H1 (cell line): ENCODE measurements at regions of chr9 and their contacts with region 1.

Region 1: DNA sequence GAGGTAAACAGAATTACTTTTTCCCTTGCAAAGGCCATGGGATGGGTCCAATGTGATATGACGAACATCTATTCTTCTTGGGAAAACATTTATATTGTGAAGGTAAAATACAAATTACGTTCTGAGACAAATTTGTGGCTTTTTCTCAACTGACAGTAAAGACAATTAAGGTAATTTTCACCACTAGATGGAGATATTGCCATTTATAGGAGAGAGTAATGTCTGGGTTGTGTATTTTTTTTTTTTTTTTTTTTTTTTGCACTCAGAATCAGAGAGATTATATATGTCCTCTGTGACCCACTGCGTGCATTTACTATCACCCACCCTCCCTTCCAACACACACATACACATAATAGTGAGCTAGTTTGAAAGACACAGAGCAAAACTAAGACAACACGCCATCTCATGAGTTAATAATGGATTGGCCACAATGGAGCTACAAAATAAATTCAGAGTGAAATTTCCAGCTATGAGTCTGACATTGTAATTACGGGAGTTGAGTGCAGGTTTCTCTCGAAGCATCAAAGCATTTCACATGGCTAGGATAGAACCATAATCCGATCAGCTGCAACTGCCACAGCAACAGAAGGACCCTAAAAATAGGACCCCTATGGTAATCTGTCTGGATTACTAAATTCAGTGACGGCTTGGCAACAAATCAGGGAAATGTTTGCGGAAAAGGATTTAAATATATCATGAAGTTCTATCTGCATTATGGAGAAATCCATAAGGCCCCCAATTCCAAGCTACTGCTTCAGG is 49.2 kb downstream of the ANXA1 start:
- DNase-seq: no peak
- H3K4me3 ChIP-seq: no peak overlapping the region
- H3K27ac ChIP-seq: no peak overlapping the region
- H3K4me1 ChIP-seq: 0 out of 7 replicates have a peak, but pooled peaks cover 0 to 4% (median 0%) of the 10 kb centered on the region in 4 experiments
- H3K27me3 ChIP-seq: no peaks in the 10 kb centered on the region; a peak in 1 of 7 replicates
- CTCF ChIP-seq: peak in 2 of 3 experiments; percentile 37 to 45; a peak in 2 of 4 replicates
- EP300 ChIP-seq: no peak
- POLR2A ChIP-seq: no peak
- RAD21 ChIP-seq: peak; percentile 64 to 76

Region 2: DNA sequence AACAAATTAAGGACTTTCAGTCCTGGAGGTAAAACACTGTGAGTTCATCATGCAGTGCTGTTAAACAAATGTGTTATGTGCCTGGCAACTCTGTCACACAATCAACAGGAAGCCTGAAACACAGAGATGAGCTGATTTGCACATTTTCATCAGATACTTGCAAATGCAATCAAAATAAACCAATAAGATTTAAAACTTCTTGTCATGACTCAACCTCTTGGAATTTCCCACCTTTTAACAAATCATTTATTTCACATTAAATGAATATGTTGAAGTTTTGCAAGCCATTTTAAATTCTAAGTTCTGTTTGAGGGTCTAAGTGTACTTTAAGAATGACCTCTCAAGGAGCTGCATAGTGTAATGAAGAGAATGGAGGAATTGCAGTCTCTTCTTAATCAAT is 15.2 kb after region 1 on chr9:
- CTCF ChIA-PET with region 1: interaction called, 26 read pairs
- POLR2A ChIA-PET with region 1: interaction called, 3 read pairs
- DNase-seq: no peak
- H3K4me3 ChIP-seq: no peak overlapping the region
- H3K27ac ChIP-seq: peak overlapping the region; percentile 50; the same call in 1 of the 2 replicates
- H3K4me1 ChIP-seq: peaks cover 0 to 21% (median 6%) of the 10 kb centered on the region in 4 experiments; a peak in 5 of 7 replicates
- H3K27me3 ChIP-seq: no peaks in the 10 kb centered on the region
- CTCF ChIP-seq: no peak
- EP300 ChIP-seq: no peak
- POLR2A ChIP-seq: no peak
- RAD21 ChIP-seq: no peak

Region 3: GRCh38 chr9:73269430-73270101 is 68.7 kb after region 1 on chr9:
- CTCF ChIA-PET with region 1: interaction called, 18 read pairs
- POLR2A ChIA-PET with region 1: no interaction called
- DNase-seq: no peak
- H3K4me3 ChIP-seq: no peak overlapping the region
- H3K27ac ChIP-seq: no peak overlapping the region
- H3K4me1 ChIP-seq: peaks cover 0 to 4% (median 0%) of the 10 kb centered on the region in 4 experiments; a peak in 1 of 7 replicates
- H3K27me3 ChIP-seq: no peaks in the 10 kb centered on the region
- CTCF ChIP-seq: peak in 1 of 3 experiments; percentile 16; a peak in 1 of 4 replicates
- EP300 ChIP-seq: no peak
- POLR2A ChIP-seq: no peak
- RAD21 ChIP-seq: peak; percentile 43 to 58

Region 4: GRCh38 chr9:73565833-73566465 is 365.1 kb after region 1 on chr9:
- CTCF ChIA-PET with region 1: interaction called, 30 read pairs
- POLR2A ChIA-PET with region 1: no interaction called
- DNase-seq: peak in 1 of 2 experiments; percentile 25
- H3K4me3 ChIP-seq: no peak overlapping the region
- H3K27ac ChIP-seq: no peak overlapping the region
- H3K4me1 ChIP-seq: no peaks in the 10 kb centered on the region
- H3K27me3 ChIP-seq: no peaks in the 10 kb centered on the region
- CTCF ChIP-seq: peak; percentile 71 to 85 (median 71)
- EP300 ChIP-seq: no peak
- POLR2A ChIP-seq: no peak
- RAD21 ChIP-seq: peak; percentile 89 to 91